B cell (primary cell): ENCODE measurements at regions of chr9 and their contacts with region 1.

Region 1: GRCh38 chr9:133992780-133993634 is 883 bp upstream of the VAV2 start:
- DNase-seq: peak; percentile 90
- ATAC-seq: peak; percentile 79
- H3K4me3 ChIP-seq: peak overlapping the region; percentile 31 to 86 (median 81)
- H3K4me3 Mint-ChIP-seq: peak overlapping the region; percentile 89
- H3K27ac ChIP-seq: peak overlapping the region; percentile 26 to 83
- H3K27ac Mint-ChIP-seq: peak overlapping the region; percentile 86
- H3K4me1 ChIP-seq: peaks cover 27 to 42% of the 10 kb centered on the region in 2 donors
- H3K4me1 Mint-ChIP-seq: peaks cover 30% of the 10 kb centered on the region
- H3K27me3 ChIP-seq: no peaks in the 10 kb centered on the region
- H3K27me3 Mint-ChIP-seq: no peaks in the 10 kb centered on the region
- CTCF ChIP-seq: peak; percentile 53

Region 2: DNA sequence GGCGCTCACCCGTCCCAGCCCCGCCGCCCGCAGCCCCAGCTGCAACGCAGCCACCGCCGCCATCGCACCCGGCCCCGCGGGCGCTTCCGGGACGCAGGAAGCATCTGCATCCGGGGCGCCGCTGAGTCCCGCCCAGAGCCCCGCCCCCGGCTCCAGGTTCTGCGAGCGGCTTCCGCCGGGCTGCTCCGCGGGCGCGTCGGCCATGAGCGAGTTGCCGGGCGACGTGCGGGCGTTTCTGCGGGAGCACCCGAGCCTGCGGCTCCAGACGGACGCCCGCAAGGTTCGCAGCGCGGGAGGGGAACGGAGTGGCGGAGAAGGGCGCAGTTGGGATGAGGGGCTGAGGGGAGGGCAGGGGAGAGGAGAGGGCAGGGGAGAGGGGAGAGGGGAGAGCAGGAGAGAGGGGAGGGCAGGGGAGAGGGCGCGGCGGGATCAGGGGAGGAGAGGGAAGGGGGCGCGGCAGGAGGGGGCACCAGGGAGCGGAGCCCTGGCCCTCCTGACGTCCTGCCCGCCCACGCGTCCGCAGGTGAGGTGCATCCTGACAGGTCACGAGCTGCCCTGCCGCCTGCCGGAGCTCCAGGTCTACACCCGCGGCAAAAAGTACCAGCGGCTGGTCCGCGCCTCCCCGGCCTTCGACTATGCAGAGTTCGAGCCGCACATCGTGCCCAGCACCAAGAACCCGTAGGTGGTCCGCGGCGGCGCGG is 636.5 kb before region 1 on chr9 and contains the starts of genes SURF1 and SURF2:
- CTCF ChIA-PET with region 1: no interaction called
- POLR2A ChIA-PET with region 1: no interaction called
- intact Hi-C with region 1: no loop called
- DNase-seq: peak; percentile 88
- ATAC-seq: peak; percentile 88
- H3K4me3 ChIP-seq: peak within 1 kb of the TSS; percentile 39 to 91 (median 75)
- H3K4me3 Mint-ChIP-seq: peak within 1 kb of the TSS; percentile 89
- H3K27ac ChIP-seq: peak within 1 kb of the TSS; percentile 55 to 90
- H3K27ac Mint-ChIP-seq: peak within 1 kb of the TSS; percentile 83
- H3K4me1 ChIP-seq: peaks cover 16 to 29% of the 10 kb centered on the region in 2 donors
- H3K4me1 Mint-ChIP-seq: peaks cover 32% of the 10 kb centered on the region
- H3K27me3 ChIP-seq: no peaks in the 10 kb centered on the region
- H3K27me3 Mint-ChIP-seq: no peaks in the 10 kb centered on the region
- CTCF ChIP-seq: peak; percentile 33
- total RNA-seq, gene SURF1: 44.1 and 56.2 TPM in 2 replicates
- total RNA-seq, gene SURF2: 16.9 and 17.1 TPM in 2 replicates

Region 3: GRCh38 chr9:133782157-133783130 is 210.6 kb before region 1 on chr9:
- CTCF ChIA-PET with region 1: interaction called, 561 read pairs
- POLR2A ChIA-PET with region 1: interaction called, 18 read pairs
- intact Hi-C with region 1: loop called (anchors 1 kb)
- DNase-seq: peak; percentile 85
- ATAC-seq: peak; percentile 16
- H3K4me3 ChIP-seq: no peak overlapping the region
- H3K4me3 Mint-ChIP-seq: peak overlapping the region; percentile 59
- H3K27ac ChIP-seq: peak overlapping the region; percentile 2 to 59
- H3K27ac Mint-ChIP-seq: peak overlapping the region; percentile 82
- H3K4me1 ChIP-seq: peaks cover 54 to 62% of the 10 kb centered on the region in 2 donors
- H3K4me1 Mint-ChIP-seq: peaks cover 61% of the 10 kb centered on the region
- H3K27me3 ChIP-seq: no peaks in the 10 kb centered on the region
- H3K27me3 Mint-ChIP-seq: no peaks in the 10 kb centered on the region
- CTCF ChIP-seq: peak; percentile 85

Region 4: GRCh38 chr9:133821601-133822429 is 171.2 kb before region 1 on chr9:
- CTCF ChIA-PET with region 1: interaction called, 10 read pairs
- POLR2A ChIA-PET with region 1: no interaction called
- intact Hi-C with region 1: loop called (anchors 1 kb)
- DNase-seq: peak; percentile 83
- ATAC-seq: peak; percentile 56
- H3K4me3 ChIP-seq: peak overlapping the region in 4 of 5 experiments; percentile 31 to 63 (median 40)
- H3K4me3 Mint-ChIP-seq: peak overlapping the region; percentile 88
- H3K27ac ChIP-seq: peak overlapping the region; percentile 99
- H3K27ac Mint-ChIP-seq: peak overlapping the region; percentile 97
- H3K4me1 ChIP-seq: peaks cover 55 to 70% of the 10 kb centered on the region in 2 donors
- H3K4me1 Mint-ChIP-seq: peaks cover 81% of the 10 kb centered on the region
- H3K27me3 ChIP-seq: no peaks in the 10 kb centered on the region
- H3K27me3 Mint-ChIP-seq: no peaks in the 10 kb centered on the region
- CTCF ChIP-seq: no peak

Region 5: DNA sequence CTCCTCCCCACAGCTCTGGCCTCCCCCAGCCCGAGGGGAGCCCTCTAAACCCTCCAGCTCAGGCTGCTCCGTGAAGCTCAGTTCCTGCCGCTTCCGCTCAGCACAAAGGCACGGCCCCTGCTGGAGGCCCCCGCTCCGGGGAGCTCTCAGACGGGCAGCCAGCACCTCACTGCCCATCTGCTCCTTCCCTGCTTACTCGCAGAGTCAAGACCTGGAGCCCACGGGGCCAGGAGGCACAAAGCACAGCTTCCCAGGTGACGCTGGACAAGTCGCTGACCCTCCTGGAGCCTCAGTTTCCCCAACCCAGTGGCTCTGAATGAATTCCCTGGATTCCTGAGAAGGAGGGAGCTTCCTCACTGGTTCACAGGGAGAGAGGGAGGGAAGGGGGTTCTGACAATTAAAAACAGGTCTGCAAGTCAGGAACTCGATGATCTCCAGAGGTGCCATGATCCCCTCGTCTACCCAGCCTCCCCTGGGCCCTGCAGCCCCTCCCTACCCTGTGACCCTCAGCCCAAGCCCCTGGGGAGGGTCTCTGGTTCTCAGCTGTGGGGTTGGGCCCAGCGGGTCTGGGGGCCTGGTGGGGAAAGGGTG is 37.1 kb before region 1 on chr9:
- CTCF ChIA-PET with region 1: interaction called, 43 read pairs
- POLR2A ChIA-PET with region 1: interaction called, 19 read pairs
- intact Hi-C with region 1: loop called (anchors 2 kb)
- DNase-seq: peak; percentile 72
- ATAC-seq: peak; percentile 48
- H3K4me3 ChIP-seq: peak overlapping the region; percentile 25 to 69 (median 51)
- H3K4me3 Mint-ChIP-seq: peak overlapping the region; percentile 83
- H3K27ac ChIP-seq: peak overlapping the region; percentile 93 to 94
- H3K27ac Mint-ChIP-seq: peak overlapping the region; percentile 98
- H3K4me1 ChIP-seq: peaks cover 66 to 72% of the 10 kb centered on the region in 2 donors
- H3K4me1 Mint-ChIP-seq: peaks cover 67% of the 10 kb centered on the region
- H3K27me3 ChIP-seq: no peaks in the 10 kb centered on the region
- H3K27me3 Mint-ChIP-seq: no peaks in the 10 kb centered on the region
- CTCF ChIP-seq: no peak

Region 6: DNA sequence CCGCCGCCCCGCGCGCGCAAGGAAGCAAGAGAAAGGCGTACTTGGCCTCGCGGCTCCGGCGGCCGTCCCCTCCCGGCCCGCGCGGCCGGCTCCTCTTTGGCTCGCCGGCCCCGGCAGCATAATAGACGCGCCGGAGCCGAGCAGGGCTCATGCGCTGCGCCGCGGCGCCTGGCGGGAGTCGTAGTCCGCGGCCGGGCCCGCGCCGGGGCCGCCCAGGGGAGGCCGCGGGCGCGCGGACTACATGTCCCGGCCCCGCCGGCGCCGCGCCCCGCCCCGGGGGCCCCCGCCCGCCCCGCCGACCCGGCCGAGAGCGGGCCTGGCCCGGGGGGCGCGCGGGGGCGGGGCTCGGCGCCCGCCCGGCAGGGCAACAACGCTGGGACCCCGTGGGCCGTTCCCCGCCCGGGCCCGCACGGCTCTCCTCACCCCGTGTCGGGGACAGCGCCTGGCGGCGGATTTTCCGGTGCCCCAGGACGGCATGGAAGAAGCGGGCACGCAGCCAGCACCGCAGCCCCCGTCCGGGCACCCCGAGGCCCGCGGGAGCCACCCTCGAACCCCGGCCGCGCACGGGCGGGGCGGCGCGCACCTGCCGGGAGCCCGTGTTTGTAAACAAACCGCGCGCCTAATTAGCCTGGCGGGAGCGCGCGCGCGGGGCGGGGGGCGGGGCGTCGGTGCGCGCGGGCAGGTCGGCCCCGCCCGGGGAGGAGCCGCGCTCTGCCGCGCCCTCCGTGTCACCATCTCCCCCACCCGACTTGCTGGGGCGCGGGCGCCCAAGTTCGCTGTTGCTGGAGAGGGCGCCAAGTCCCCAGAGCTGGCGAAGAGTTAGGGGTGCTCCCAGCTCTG is 75.1 kb after region 1 on chr9 and contains the start of gene BRD3:
- CTCF ChIA-PET with region 1: interaction called, 3 read pairs
- POLR2A ChIA-PET with region 1: interaction called, 4 read pairs
- intact Hi-C with region 1: loop called (anchors 1 kb)
- DNase-seq: peak; percentile 93
- ATAC-seq: peak; percentile 84
- H3K4me3 ChIP-seq: peak within 1 kb of the TSS; percentile 54 to 85 (median 68)
- H3K4me3 Mint-ChIP-seq: peak within 1 kb of the TSS; percentile 90
- H3K27ac ChIP-seq: peak within 1 kb of the TSS; percentile 75 to 86
- H3K27ac Mint-ChIP-seq: peak within 1 kb of the TSS; percentile 89
- H3K4me1 ChIP-seq: peaks cover 20 to 30% of the 10 kb centered on the region in 2 donors
- H3K4me1 Mint-ChIP-seq: peaks cover 29% of the 10 kb centered on the region
- H3K27me3 ChIP-seq: peaks cover 0 to 23% (median 10%) of the 10 kb centered on the region in 4 experiments
- H3K27me3 Mint-ChIP-seq: peaks cover 14% of the 10 kb centered on the region
- CTCF ChIP-seq: no peak
- total RNA-seq, gene BRD3: 38.0 and 47.5 TPM in 2 replicates

Region 7: DNA sequence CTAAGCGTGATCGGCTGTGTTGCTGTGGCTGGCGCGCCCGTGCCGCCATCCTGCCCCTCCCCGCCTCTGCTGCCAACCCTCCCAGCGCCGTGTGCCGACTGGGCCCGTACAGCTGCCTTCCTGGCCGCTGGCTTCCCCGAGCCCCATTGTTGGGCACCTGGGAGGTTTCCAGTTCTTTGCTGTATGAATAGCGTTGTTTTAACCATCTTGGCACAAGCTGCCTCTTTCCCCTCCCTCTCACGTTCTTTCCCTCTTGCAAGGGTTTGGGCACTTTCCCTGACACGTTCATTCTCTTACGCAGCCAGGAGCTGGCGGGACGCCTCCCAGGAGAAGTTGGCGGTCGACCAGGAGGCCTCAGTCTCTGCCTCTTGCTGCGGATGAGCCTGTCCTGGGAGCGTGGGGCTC is 290.1 kb after region 1 on chr9:
- CTCF ChIA-PET with region 1: no interaction called
- POLR2A ChIA-PET with region 1: no interaction called
- intact Hi-C with region 1: no loop called
- DNase-seq: no peak
- ATAC-seq: no peak
- H3K4me3 ChIP-seq: no peak overlapping the region
- H3K4me3 Mint-ChIP-seq: no peak overlapping the region
- H3K27ac ChIP-seq: no peak overlapping the region
- H3K27ac Mint-ChIP-seq: no peak overlapping the region
- H3K4me1 ChIP-seq: peaks cover 10 to 15% of the 10 kb centered on the region in 2 donors
- H3K4me1 Mint-ChIP-seq: peaks cover 14% of the 10 kb centered on the region
- H3K27me3 ChIP-seq: peaks cover 0 to 22% (median 6%) of the 10 kb centered on the region in 4 experiments
- H3K27me3 Mint-ChIP-seq: peaks cover 34% of the 10 kb centered on the region
- CTCF ChIP-seq: no peak

Region 8: GRCh38 chr9:134301387-134302129 is 308.6 kb after region 1 on chr9:
- CTCF ChIA-PET with region 1: no interaction called
- POLR2A ChIA-PET with region 1: no interaction called
- intact Hi-C with region 1: no loop called
- DNase-seq: no peak
- ATAC-seq: no peak
- H3K4me3 ChIP-seq: no peak overlapping the region
- H3K4me3 Mint-ChIP-seq: no peak overlapping the region
- H3K27ac ChIP-seq: no peak overlapping the region
- H3K27ac Mint-ChIP-seq: no peak overlapping the region
- H3K4me1 ChIP-seq: no peaks in the 10 kb centered on the region
- H3K4me1 Mint-ChIP-seq: peaks cover 3% of the 10 kb centered on the region
- H3K27me3 ChIP-seq: peaks cover 0 to 5% (median 0%) of the 10 kb centered on the region in 4 experiments
- H3K27me3 Mint-ChIP-seq: peaks cover 7% of the 10 kb centered on the region
- CTCF ChIP-seq: no peak

Region 9: GRCh38 chr9:134689321-134690181 is 696.5 kb after region 1 on chr9:
- CTCF ChIA-PET with region 1: no interaction called
- POLR2A ChIA-PET with region 1: no interaction called
- intact Hi-C with region 1: no loop called
- DNase-seq: peak; percentile 21
- ATAC-seq: no peak
- H3K4me3 ChIP-seq: no peak overlapping the region
- H3K4me3 Mint-ChIP-seq: no peak overlapping the region
- H3K27ac ChIP-seq: no peak overlapping the region
- H3K27ac Mint-ChIP-seq: no peak overlapping the region
- H3K4me1 ChIP-seq: peaks cover 5 to 6% of the 10 kb centered on the region in 2 donors
- H3K4me1 Mint-ChIP-seq: peaks cover 1% of the 10 kb centered on the region
- H3K27me3 ChIP-seq: peaks cover 0 to under 1% (median 0%) of the 10 kb centered on the region in 4 experiments
- H3K27me3 Mint-ChIP-seq: no peaks in the 10 kb centered on the region
- CTCF ChIP-seq: peak; percentile 53